PC-3 (cell line): ENCODE measurements at regions of chr22 and their contacts with region 1.

Region 1: GRCh38 chr22:18024276-18024947 is at the start of gene MICAL3:
- DNase-seq: peak; percentile 74
- ATAC-seq: peak; percentile 87
- H3K4me3 ChIP-seq: peak within 1 kb of the TSS; percentile 81
- H3K27ac ChIP-seq: peak within 1 kb of the TSS; percentile 33
- H3K4me1 ChIP-seq: peaks cover 8% of the 10 kb centered on the region
- H3K27me3 ChIP-seq: no peaks in the 10 kb centered on the region
- CTCF ChIP-seq: peak; percentile 51; the same call in 1 of the 2 replicates
- total RNA-seq, gene MICAL3: 23.7 and 27.8 TPM in 2 replicates

Region 2: DNA sequence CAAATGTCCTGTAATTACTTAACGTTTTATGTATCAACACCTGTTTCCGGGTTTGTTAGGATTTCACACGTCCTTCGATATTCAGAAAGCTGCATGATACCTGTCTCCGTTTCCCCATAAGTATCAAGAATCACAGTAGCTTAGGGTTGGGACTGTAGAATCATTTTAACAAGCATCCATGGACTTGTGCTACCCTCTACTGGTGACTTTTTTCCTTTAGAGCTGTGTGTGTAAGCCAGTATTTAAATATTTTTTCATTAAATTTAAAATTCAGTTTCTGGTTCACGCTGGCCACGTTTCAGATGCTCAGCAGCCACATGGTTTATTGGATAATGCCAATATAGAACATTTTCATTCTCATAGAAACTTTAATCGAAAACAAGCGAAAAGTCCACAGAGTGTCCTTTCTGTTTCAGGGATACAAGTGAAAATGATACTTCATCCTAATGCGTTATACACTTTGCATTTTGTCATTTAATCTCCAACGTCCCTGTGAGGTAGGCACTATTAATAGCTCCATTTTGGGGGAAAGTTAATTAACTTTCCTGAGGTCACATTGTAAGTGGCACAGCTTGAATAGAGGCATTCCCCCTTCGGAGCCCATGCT is 522.6 kb before region 1 on chr22:
- CTCF ChIA-PET with region 1: no interaction called
- POLR2A ChIA-PET with region 1: no interaction called
- intact Hi-C with region 1: no loop called
- DNase-seq: peak; percentile 73
- ATAC-seq: peak; percentile 80
- H3K4me3 ChIP-seq: no peak overlapping the region
- H3K27ac ChIP-seq: no peak overlapping the region
- H3K4me1 ChIP-seq: no peaks in the 10 kb centered on the region
- H3K27me3 ChIP-seq: peaks cover 33% of the 10 kb centered on the region
- CTCF ChIP-seq: peak; percentile 69

Region 3: GRCh38 chr22:17867160-17867785 is 157.1 kb before region 1 on chr22:
- CTCF ChIA-PET with region 1: no interaction called
- POLR2A ChIA-PET with region 1: no interaction called
- intact Hi-C with region 1: no loop called
- DNase-seq: no peak
- ATAC-seq: no peak
- H3K4me3 ChIP-seq: no peak overlapping the region
- H3K27ac ChIP-seq: no peak overlapping the region
- H3K4me1 ChIP-seq: no peaks in the 10 kb centered on the region
- H3K27me3 ChIP-seq: no peaks in the 10 kb centered on the region
- CTCF ChIP-seq: no peak

Region 4: GRCh38 chr22:18057568-18058209 is 33.3 kb after region 1 on chr22:
- CTCF ChIA-PET with region 1: no interaction called
- POLR2A ChIA-PET with region 1: no interaction called
- intact Hi-C with region 1: loop called (anchors 5 kb)
- DNase-seq: peak; percentile 96
- ATAC-seq: peak; percentile 66
- H3K4me3 ChIP-seq: no peak overlapping the region
- H3K27ac ChIP-seq: peak overlapping the region; percentile 70
- H3K4me1 ChIP-seq: peaks cover 50% of the 10 kb centered on the region
- H3K27me3 ChIP-seq: no peaks in the 10 kb centered on the region
- CTCF ChIP-seq: no peak